HEK293T (cell line): ENCODE measurements at regions of chr14 and their contacts with region 1.

Region 1: DNA sequence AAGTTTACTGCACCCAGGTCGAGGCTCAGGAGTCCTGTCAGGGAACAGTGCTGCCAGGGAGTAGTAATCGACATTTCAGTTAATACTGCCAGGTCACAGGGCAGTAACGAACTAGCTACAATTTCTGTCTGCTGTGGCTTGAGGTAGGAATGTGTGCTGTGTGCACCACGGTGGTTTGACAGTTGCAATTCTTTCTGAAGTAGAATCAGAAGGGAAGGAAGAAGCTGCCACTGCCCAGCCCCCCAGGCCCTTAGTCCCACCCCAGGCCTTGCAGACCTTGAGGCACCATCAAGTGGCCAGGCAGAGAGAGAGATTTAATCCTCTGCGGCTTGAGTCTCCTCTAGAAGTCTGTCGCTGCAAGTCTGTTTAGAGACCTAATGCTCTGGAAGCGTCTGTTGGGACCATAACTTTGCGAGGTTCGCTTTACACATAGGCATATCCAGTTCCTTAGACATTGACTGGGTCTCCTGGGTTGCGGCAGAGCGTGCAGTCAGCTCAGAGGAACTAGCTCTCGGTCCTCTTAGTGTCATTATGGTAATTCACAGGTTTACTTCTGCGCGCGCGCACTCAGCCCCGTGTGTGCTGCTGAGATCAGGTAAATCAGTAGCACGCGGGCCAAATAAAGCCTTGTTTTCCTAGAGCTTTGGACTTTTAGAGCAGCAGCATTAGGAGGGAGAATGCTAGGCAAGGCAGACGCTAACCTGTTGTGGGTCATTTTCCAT is 9.8 kb downstream of the NKX2-1 start:
- DNase-seq: no peak

Region 2: DNA sequence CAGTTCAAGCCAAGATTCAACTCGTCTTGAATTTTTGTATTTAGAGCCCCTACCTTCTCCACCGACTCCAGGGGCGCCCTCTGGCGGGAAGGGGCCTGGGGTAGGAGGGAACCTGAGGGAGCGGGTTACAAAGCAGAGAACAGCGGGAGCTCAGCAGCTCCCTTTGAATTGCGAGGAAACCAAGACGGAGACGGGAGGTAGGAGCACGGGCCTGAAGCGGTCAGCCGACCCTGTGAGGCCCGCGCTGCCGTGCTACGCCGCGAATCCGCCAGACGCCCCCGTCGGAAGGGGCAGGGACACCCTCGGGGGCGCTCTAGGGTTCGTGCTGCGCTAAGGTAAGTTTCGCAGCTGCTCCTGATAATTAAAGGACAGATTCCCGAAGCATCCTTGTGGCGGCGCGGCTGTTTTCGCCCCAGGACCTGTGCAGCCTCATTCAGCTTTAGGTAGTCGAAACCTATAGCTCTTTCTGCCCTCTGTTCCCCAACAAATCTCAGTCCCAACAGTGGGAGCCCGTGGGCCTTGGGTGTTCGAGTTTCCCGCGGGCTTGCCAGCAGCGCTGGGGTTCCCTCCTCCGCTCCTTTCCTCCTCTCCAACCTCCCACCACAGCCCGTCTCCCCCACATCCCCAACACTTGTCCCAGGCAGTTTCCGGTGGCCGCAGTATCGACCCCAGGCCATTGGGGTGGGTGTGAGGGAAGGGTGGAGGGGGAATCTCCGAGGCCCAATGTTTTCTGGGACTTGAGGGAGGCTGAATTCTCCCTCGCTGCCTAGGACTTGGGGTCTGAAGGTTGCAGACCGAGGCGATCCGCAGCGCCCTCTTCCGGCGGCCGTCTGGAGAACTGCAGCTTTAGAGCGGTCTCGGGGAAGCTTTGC is 14.9 kb after region 1 on chr14:
- CTCF ChIA-PET with region 1: interaction called, 15 read pairs
- POLR2A ChIA-PET with region 1: interaction called, 3 read pairs
- DNase-seq: peak; percentile 81